KBM-7 (cell line): ENCODE measurements at regions of chrX and their contacts with region 1.

Region 1: GRCh38 chrX:70769659-70770232 is 138.8 kb downstream of the TEX11 start:
- DNase-seq: peak; percentile 39

Region 2: GRCh38 chrX:70970482-70970995 is 200.8 kb after region 1 on chrX:
- in situ Hi-C with region 1: loop called (anchors 25 kb)
- DNase-seq: peak; percentile 61

Region 3: GRCh38 chrX:71171110-71171801 is 401.5 kb after region 1 on chrX:
- in situ Hi-C with region 1: loop called (anchors 25 kb)
- DNase-seq: peak; percentile 86